ENCODE measurements at regions of chr16 and their contacts with region 1.

Region 1: DNA sequence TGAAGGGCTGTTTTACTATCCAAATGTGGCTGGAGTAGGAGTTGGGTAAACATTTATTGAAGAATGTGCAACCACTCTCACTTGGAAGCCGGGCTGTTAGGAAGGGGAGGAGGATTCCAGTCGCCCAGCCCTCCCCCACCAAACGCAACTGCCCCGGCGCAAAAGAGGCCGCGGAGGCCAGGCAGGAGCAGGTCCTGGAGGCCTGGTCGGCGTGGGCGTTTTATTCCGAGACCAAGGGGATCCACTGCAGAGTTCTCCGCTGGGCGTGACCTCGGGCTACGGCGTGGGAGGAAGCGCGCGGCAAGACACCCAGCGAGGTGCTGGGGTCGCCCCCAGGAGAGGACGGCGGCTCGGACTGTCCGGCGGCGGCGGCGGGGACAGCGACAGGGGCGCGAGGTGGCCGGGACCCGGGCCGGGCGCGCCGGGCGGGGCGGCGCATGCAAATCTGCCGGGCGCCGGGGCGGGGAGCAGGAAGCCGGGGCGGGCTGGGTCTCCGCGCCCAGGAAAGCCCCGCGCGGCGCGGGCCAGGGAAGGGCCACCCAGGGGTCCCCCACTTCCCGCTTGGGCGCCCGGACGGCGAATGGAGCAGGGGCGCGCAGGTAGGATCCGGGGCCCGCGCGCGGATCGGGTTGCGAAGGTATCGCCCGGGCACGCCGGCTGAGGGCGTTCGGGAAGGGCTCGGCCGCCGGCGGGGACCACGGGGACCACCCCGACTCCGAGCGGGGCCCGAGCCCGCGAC is at the start of gene IL4R:
- DNase-seq: peak; percentile 33 to 84 (median 56)
- ATAC-seq: peak; percentile 46
- H3K4me3 ChIP-seq: peak within 1 kb of the TSS; percentile 91
- H3K4me3 Mint-ChIP-seq: peak within 1 kb of the TSS; percentile 95
- H3K27ac ChIP-seq: peak within 1 kb of the TSS; percentile 89 to 94
- H3K27ac Mint-ChIP-seq: peak within 1 kb of the TSS; percentile 92
- H3K4me1 ChIP-seq: peaks cover 56% of the 10 kb centered on the region
- H3K4me1 Mint-ChIP-seq: peaks cover 47% of the 10 kb centered on the region
- H3K27me3 ChIP-seq: no peaks in the 10 kb centered on the region
- H3K27me3 Mint-ChIP-seq: no peaks in the 10 kb centered on the region
- CTCF ChIP-seq: no peak
- total RNA-seq, gene IL4R: 145 to 147 TPM

Region 2: DNA sequence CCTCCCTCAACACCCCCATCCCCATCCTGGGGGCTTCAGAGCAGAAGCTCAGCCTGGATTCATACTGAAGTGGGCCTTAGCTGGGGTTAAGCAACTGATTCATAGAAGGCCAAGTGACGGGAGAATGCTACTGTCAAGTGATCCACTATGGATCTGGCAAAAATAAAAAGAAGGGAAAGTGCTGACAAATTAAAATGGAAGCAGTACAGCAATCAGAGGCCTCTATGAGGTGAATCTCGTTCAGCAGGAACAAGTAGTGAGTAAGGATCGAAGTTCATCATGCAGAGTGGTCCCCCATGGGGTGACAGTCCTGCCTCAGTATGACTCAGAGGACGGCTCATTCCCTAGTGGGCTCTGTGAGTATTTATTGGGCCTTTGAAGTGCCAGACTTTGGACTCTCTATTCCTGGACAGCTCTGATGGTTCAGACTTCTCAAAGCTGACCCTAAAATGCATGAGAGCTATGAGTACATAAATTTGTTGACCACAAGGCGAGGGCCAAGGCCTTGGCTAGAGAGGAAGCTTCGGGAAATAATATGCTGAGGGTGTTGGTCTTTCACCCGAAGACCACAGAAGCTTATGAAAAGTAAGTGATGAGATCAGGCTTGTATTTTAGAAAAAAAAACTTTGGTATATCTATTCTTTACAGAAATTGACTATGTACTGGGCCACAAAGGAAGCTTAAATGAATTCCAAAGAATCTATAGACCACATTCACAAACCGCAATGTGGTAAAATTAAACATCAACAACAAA is 39.7 kb before region 1 on chr16:
- CTCF ChIA-PET with region 1: interaction called, 3 read pairs
- POLR2A ChIA-PET with region 1: interaction called, 7 read pairs
- intact Hi-C with region 1: loop called in 1 of 2 experiments (anchors 5 kb)
- DNase-seq: peak in 4 of 14 experiments; percentile 28 to 57 (median 50)
- ATAC-seq: peak; percentile 42
- H3K4me3 ChIP-seq: peak overlapping the region; percentile 9
- H3K4me3 Mint-ChIP-seq: peak overlapping the region; percentile 70
- H3K27ac ChIP-seq: no peak overlapping the region
- H3K27ac Mint-ChIP-seq: peak overlapping the region; percentile 77
- H3K4me1 ChIP-seq: peaks cover 38% of the 10 kb centered on the region
- H3K4me1 Mint-ChIP-seq: peaks cover 53% of the 10 kb centered on the region
- H3K27me3 ChIP-seq: no peaks in the 10 kb centered on the region
- H3K27me3 Mint-ChIP-seq: no peaks in the 10 kb centered on the region
- CTCF ChIP-seq: no peak

Region 3: GRCh38 chr16:27387724-27388123 is 74.1 kb after region 1 on chr16:
- CTCF ChIA-PET with region 1: no interaction called
- POLR2A ChIA-PET with region 1: no interaction called
- intact Hi-C with region 1: no loop called
- DNase-seq: no peak
- ATAC-seq: no peak
- H3K4me3 ChIP-seq: no peak overlapping the region
- H3K4me3 Mint-ChIP-seq: no peak overlapping the region
- H3K27ac ChIP-seq: no peak overlapping the region
- H3K27ac Mint-ChIP-seq: no peak overlapping the region
- H3K4me1 ChIP-seq: no peaks in the 10 kb centered on the region
- H3K4me1 Mint-ChIP-seq: no peaks in the 10 kb centered on the region
- H3K27me3 ChIP-seq: no peaks in the 10 kb centered on the region
- H3K27me3 Mint-ChIP-seq: no peaks in the 10 kb centered on the region
- CTCF ChIP-seq: no peak

Region 4: GRCh38 chr16:27449434-27450195 is 136.0 kb after region 1 on chr16:
- CTCF ChIA-PET with region 1: interaction called, 3 read pairs
- POLR2A ChIA-PET with region 1: interaction called, 4 read pairs
- intact Hi-C with region 1: loop called in 1 of 2 experiments (anchors 5 kb)
- DNase-seq: peak; percentile 31 to 93 (median 60)
- ATAC-seq: peak; percentile 46
- H3K4me3 ChIP-seq: peak overlapping the region; percentile 10
- H3K4me3 Mint-ChIP-seq: peak overlapping the region; percentile 70
- H3K27ac ChIP-seq: peak overlapping the region in 1 of 2 donors; percentile 18
- H3K27ac Mint-ChIP-seq: peak overlapping the region; percentile 93
- H3K4me1 ChIP-seq: peaks cover 78% of the 10 kb centered on the region
- H3K4me1 Mint-ChIP-seq: peaks cover 81% of the 10 kb centered on the region
- H3K27me3 ChIP-seq: no peaks in the 10 kb centered on the region
- H3K27me3 Mint-ChIP-seq: no peaks in the 10 kb centered on the region
- CTCF ChIP-seq: no peak

Measured in CD4-positive, alpha-beta T cell (primary cell).